ENCODE measurements at regions of chr16 and their contacts with region 1.

Region 1: DNA sequence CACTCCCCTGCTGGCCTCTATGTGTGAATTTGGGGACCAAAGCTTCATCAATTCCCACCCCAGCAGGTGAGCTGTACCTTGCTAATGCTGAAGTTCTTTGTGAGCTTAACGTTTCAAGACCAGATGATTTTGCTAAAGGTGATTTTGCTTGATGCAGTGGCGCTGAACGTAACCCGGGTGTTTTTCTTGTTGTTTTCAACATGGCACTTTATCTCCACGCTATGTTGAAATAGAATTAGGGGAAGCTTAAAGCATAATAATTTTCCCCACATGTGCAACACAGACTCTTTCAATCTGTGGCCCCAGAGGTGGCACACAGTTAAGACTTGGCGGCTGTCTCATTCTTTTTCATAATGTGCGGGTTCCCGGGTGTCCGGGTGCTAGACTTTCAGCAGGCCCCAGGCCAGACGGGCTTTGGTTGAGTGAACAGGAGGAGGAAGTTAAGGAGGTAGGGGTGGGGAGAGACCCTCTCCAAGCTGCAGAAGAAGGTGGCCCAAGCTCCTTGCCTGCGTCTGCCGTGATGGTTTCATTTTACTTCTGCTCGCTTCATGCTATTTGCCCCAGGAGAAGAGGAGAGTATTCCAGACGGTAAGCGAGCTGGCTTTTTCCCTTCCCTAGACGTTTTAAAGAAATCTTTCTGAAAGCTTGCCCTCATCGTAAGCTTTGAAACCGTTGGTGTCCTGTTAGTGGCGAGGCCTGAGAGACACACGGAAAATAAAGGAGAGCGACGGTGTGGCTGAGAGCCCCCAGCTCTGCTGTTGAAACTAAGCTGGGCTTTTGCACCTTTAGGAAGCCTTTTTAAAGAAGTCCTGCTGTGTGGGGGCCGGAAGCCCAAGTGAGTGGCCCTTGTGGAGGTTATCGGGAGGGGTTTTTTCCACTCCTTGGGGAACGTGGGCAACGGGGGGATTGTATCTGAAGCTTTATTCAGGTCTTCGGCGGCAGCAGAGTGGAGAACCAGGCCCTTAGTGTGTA is 4.2 kb downstream of the FOXC2 start:
- DNase-seq: no peak
- H3K4me3 ChIP-seq: peak overlapping the region; percentile 91
- CTCF ChIP-seq: no peak

Region 2: DNA sequence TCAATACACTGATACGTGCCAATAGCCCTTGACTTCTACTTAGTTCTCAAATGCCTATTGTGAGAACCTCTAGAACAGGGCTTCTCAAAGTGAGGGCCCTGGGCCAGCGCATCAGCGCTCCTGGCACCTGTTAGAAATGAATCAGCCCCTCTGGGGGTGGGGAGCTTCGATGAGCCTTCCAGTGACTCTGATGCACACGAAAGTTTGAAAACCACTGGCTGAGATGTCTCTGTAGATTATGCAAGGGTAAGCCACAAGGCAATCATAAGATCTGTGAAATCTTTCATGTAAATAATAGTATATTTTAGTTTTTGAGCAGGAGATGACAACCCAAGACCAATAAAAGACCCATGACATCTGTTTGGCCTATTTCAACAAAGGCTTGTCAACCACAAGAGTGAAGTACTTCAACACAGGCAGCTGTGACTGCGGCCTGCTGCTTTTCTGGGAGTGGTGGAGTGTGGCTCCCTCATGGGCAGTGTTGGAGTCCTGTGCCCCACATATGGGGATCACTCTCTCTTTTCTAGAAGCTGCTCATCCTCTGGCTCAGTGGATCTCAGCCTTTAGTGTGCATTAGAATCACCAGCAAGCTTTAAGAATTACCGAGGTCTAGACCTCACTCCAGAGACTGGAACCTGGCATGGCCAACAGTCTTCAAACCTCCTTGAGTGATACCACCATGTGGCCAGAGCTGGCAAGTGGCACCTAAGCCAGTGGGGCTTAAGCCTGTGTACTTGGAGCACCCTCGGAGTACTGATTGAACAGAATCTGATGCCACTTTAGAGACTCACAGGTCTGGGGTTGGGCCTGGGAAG is 21.6 kb before region 1 on chr16:
- CTCF ChIA-PET with region 1: no interaction called
- POLR2A ChIA-PET with region 1: no interaction called
- DNase-seq: no peak
- H3K4me3 ChIP-seq: no peak overlapping the region
- CTCF ChIP-seq: no peak

Region 3: GRCh38 chr16:86834451-86835035 is 263.7 kb after region 1 on chr16:
- CTCF ChIA-PET with region 1: interaction called, 11 read pairs
- POLR2A ChIA-PET with region 1: interaction called, 6 read pairs
- DNase-seq: peak; percentile 71
- H3K4me3 ChIP-seq: no peak overlapping the region
- CTCF ChIP-seq: peak; percentile 54

Measured in AG04449 (cell line).